ENCODE measurements at regions of chr10 and their contacts with region 1.

Region 1: GRCh38 chr10:103931587-103931986 is 13.6 kb upstream of the STN1 start:
- DNase-seq: no peak
- ATAC-seq: no peak
- H3K4me3 ChIP-seq: no peak overlapping the region
- H3K27ac ChIP-seq: no peak overlapping the region
- H3K4me1 ChIP-seq: peaks cover 0 to 5% (median 0%) of the 10 kb centered on the region in 9 donors
- H3K27me3 ChIP-seq: no peaks in the 10 kb centered on the region
- CTCF ChIP-seq: no peak

Region 2: DNA sequence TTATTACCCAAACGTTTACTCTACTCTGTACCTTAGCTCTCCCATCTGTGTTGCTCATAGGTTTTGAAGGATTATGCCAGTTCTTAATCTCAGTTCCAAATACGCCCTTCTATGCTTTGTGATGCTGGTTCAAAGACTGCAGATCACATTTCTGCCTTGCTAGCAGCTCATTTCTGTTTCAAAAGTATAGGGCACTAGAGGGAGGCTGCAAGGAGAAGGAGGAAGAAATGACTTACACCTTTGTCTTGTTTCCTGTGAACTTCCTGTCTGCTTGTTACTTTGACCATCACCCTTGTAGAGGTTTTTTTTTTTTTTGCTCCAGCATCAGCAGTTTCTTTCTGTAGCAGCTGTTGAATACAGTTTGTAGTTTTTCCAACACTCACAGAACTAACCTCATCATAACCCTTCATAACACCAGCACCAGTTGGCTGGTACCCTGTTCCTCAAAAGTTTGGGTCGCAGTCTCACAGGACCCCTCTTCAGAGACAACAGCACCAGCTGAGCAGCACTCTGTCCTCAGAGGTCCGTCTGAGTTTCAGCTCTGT is 51.9 kb after region 1 on chr10:
- intact Hi-C with region 1: loop called in 1 of 10 experiments (anchors 2 kb)
- DNase-seq: no peak
- ATAC-seq: peak in 4 of 8 donors; percentile 25 to 54 (median 32)
- H3K4me3 ChIP-seq: peak overlapping the region in 1 of 10 donors; percentile 6
- H3K27ac ChIP-seq: peak overlapping the region in 4 of 10 donors; percentile 2 to 77 (median 24)
- H3K4me1 ChIP-seq: peaks cover 0 to 85% (median 32%) of the 10 kb centered on the region in 9 donors
- H3K27me3 ChIP-seq: no peaks in the 10 kb centered on the region
- CTCF ChIP-seq: no peak

Region 3: DNA sequence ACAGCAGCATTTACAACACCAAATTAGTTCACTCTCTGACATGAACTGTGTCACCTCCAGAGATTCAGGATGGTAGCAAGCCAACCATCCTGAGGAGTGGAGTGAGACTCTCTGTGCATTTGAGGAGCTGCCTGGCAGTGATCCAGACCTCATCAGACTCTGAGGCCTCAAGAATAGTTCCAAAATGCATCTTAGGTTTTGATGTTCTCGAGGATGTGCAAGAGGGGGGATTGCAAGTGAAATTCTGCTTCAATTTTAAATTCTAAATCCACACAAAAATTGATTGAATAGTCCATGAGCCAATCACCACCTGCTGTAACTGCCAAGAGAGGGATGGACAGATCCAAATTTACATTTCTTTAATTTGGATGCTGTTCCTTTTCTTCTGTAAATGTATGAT is 85.1 kb after region 1 on chr10:
- intact Hi-C with region 1: no loop called
- DNase-seq: no peak
- ATAC-seq: no peak
- H3K4me3 ChIP-seq: no peak overlapping the region
- H3K27ac ChIP-seq: no peak overlapping the region
- H3K4me1 ChIP-seq: no peaks in the 10 kb centered on the region
- H3K27me3 ChIP-seq: no peaks in the 10 kb centered on the region
- CTCF ChIP-seq: no peak

Measured in heart right ventricle (tissue), 16 donors.